ENCODE measurements at regions of chr7 and their contacts with region 1.

Region 1: DNA sequence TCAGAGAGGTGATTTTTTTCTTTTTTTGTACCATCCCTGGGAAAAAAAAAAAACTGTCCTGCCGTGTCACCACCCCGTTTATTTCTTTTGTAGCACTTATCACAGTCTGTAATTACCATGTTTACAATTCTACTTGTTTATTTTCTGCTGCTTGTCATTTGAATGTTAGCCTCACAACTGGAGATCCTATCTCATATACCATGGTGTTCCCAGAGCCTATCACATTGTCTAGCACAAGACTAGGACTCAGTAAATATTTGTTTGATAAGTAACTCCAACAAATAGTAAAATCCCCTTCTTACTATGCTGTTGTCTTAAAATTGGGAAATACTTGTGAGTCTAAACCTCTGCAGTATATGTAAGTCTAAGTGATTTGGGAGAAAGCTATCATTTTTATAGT is 36.0 kb downstream of the MKLN1 start:
- DNase-seq: no peak
- H3K4me3 ChIP-seq: no peak overlapping the region
- H3K27me3 ChIP-seq: no peaks in the 10 kb centered on the region
- CTCF ChIP-seq: no peak

Region 2: GRCh38 chr7:130322587-130322986 is 1041.1 kb before region 1 on chr7:
- CTCF ChIA-PET with region 1: no interaction called
- POLR2A ChIA-PET with region 1: no interaction called
- DNase-seq: no peak
- H3K4me3 ChIP-seq: no peak overlapping the region
- H3K27me3 ChIP-seq: no peaks in the 10 kb centered on the region
- CTCF ChIP-seq: no peak

Region 3: GRCh38 chr7:131327626-131328376 is 35.9 kb before region 1 on chr7 and contains the start of gene MKLN1:
- CTCF ChIA-PET with region 1: no interaction called
- POLR2A ChIA-PET with region 1: interaction called, 10 read pairs
- DNase-seq: peak; percentile 25
- H3K4me3 ChIP-seq: peak within 1 kb of the TSS; percentile 84
- H3K27me3 ChIP-seq: no peaks in the 10 kb centered on the region
- CTCF ChIP-seq: no peak
- polyA plus RNA-seq, gene MKLN1: 25.6 and 52.9 TPM in 2 replicates

Measured in BJ (cell line).